ENCODE measurements at regions of chr6 and their contacts with region 1.

Region 1: GRCh38 chr6:32971581-32972352 is 3.4 kb downstream of the BRD2 start:
- DNase-seq: peak; percentile 84 to 100 (median 92)
- ATAC-seq: peak; percentile 55
- H3K4me3 ChIP-seq: peak overlapping the region; percentile 70
- H3K27ac ChIP-seq: peak overlapping the region; percentile 99
- H3K4me1 ChIP-seq: peaks cover 19 to 23% of the 10 kb centered on the region in 2 experiments; a peak in 4 of 5 replicates
- H3K27me3 ChIP-seq: no peaks in the 10 kb centered on the region
- CTCF ChIP-seq: no peak
- EP300 ChIP-seq: peak; percentile 34; the same call in 1 of the 2 replicates
- POLR2A ChIP-seq: peak; percentile 100
- RAD21 ChIP-seq: peak in 1 of 2 experiments; percentile 11; a peak in 1 of 4 replicates

Region 2: DNA sequence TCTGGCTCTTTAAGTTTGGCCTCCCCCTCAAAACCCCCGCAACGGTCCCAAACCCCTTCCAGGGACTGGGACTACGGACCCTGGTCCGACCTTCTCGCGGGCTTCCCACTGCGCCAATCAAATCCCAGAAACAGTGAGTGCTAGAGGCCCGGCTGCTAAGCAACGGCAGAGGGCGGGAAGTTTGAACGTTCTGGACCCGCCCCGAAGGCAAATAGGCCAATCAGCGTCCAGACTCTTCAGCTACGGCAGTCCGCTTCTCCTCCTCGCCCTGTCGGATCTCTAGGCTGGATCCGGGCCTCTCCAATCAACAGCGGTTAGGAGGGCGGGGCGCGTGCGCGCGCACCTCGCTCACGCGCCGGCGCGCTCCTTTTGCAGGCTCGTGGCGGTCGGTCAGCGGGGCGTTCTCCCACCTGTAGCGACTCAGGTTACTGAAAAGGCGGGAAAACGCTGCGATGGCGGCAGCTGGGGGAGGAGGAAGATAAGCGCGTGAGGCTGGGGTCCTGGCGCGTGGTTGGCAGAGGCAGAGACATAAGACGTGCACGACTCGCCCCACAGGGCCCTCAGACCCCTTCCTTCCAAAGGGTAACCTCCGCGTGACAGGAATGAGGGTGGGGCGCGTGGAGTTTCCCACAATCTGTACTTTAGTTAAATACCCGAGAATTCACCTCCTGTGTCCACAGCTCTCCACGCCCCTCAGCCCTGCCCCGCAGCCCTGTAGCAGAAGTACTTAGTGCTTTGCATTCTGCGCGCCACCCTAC is 1231.9 kb before region 1 on chr6 and contains the start of gene MSH5:
- CTCF ChIA-PET with region 1: no interaction called
- POLR2A ChIA-PET with region 1: interaction called, 11 read pairs
- in situ Hi-C with region 1: no loop called
- intact Hi-C with region 1: no loop called
- DNase-seq: peak; percentile 100
- ATAC-seq: peak; percentile 84
- H3K4me3 ChIP-seq: peak within 1 kb of the TSS; percentile 64
- H3K27ac ChIP-seq: peak within 1 kb of the TSS; percentile 95
- H3K4me1 ChIP-seq: peaks cover 56 to 61% of the 10 kb centered on the region in 2 experiments
- H3K27me3 ChIP-seq: no peaks in the 10 kb centered on the region
- CTCF ChIP-seq: peak in 1 of 3 experiments; percentile 13; a peak in 1 of 6 replicates
- EP300 ChIP-seq: peak; percentile 71
- POLR2A ChIP-seq: peak; percentile 96
- RAD21 ChIP-seq: peak in 1 of 2 experiments; percentile 28; a peak in 3 of 4 replicates
- polyA plus RNA-seq, gene MSH5: 12.5 to 14.0 TPM

Region 3: GRCh38 chr6:32522302-32523047 is 449.3 kb before region 1 on chr6:
- CTCF ChIA-PET with region 1: no interaction called
- POLR2A ChIA-PET with region 1: no interaction called
- in situ Hi-C with region 1: no loop called
- intact Hi-C with region 1: no loop called
- DNase-seq: no peak
- ATAC-seq: no peak
- H3K4me3 ChIP-seq: no peak overlapping the region
- H3K27ac ChIP-seq: no peak overlapping the region
- H3K4me1 ChIP-seq: no peaks in the 10 kb centered on the region
- H3K27me3 ChIP-seq: no peaks in the 10 kb centered on the region
- CTCF ChIP-seq: no peak
- EP300 ChIP-seq: no peak
- POLR2A ChIP-seq: no peak
- RAD21 ChIP-seq: no peak

Region 4: DNA sequence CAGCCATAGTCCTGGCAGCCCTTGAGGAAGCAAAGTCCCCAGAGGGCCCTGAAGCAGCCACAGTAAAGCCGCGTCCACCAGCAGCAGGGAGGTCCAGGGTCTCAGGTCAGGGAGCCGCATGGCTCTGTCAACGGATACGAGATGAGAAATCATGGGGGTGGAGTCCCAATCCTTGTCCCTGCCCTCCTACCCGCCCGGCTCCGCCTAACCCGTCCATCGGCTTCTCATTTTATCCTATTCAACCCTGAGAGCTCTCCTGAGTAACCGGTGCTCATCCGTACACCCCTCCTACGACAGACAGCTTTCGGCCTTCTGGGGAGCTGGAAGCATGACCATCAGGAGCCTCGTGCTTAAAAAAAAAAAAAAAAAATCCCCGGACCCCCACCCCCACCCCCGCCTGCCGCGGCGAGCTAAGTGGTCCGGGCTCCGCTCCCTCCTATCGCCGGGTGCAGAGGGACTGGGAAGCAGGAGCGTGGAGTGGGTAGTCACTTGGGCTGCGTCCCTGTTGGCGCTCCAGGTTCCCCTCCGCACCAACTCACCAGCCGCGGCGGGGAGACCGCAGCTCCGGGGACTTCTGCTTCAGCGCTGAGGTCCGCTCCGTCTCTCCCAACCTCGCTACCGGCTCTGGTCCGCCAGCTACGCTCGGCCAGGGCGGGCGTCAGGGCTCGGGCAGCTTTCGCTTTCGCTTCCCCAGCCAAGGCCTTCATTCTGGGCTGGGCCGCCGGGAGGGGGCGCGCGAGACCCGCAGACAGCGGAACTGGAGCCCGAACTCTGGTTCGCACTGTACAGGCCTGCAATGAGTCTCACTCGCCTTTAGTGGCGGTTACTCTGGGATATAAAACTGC is 133.4 kb before region 1 on chr6 and contains the start of gene TAP2:
- CTCF ChIA-PET with region 1: no interaction called
- POLR2A ChIA-PET with region 1: interaction called, 27 read pairs
- in situ Hi-C with region 1: no loop called
- intact Hi-C with region 1: no loop called
- DNase-seq: peak; percentile 94 to 97 (median 96)
- ATAC-seq: peak; percentile 94
- H3K4me3 ChIP-seq: peak within 1 kb of the TSS; percentile 73
- H3K27ac ChIP-seq: peak within 1 kb of the TSS; percentile 75
- H3K4me1 ChIP-seq: peaks cover 6 to 9% of the 10 kb centered on the region in 2 experiments; a peak in 3 of 5 replicates
- H3K27me3 ChIP-seq: no peaks in the 10 kb centered on the region
- CTCF ChIP-seq: peak; percentile 98 to 99 (median 99)
- EP300 ChIP-seq: no peak
- POLR2A ChIP-seq: peak; percentile 83
- RAD21 ChIP-seq: peak; percentile 100
- polyA plus RNA-seq, gene TAP2: 2.0 to 3.1 TPM

Region 5: DNA sequence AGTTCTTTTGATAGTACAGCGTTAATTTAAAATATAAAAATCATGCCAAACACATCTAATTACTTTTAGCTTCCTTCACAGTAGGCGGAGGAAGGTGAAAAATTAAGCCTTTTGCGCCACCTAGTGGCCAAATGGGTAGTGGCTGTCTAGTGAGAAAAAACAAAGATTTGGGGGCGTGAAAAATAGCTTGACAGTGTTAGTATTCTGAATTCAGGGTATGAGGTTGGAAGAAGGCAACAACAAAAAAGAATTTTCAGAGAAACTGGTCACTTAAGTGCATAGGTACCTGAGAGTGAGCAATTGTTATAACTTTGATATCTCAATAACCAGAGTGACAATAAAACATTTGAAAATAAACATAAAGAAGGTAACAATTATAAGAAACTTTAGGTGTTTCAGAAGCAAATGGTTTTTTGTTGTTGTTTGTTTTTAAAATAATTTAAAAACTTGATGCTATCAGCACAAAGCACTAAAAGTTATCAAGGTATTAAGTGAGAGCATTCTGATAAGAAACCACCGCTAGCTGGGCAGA is 103.4 kb before region 1 on chr6:
- CTCF ChIA-PET with region 1: interaction called, 4 read pairs
- POLR2A ChIA-PET with region 1: interaction called, 15 read pairs
- in situ Hi-C with region 1: no loop called
- intact Hi-C with region 1: no loop called
- DNase-seq: peak; percentile 69 to 88 (median 73)
- ATAC-seq: peak; percentile 97
- H3K4me3 ChIP-seq: no peak overlapping the region
- H3K27ac ChIP-seq: no peak overlapping the region
- H3K4me1 ChIP-seq: no peaks in the 10 kb centered on the region
- H3K27me3 ChIP-seq: peaks cover 15 to 18% of the 10 kb centered on the region in 2 experiments; a peak in 4 of 5 replicates
- CTCF ChIP-seq: peak; percentile 82 to 98 (median 89)
- EP300 ChIP-seq: no peak
- POLR2A ChIP-seq: no peak
- RAD21 ChIP-seq: peak; percentile 95 to 98

Region 6: GRCh38 chr6:32920715-32921114 is 51.1 kb before region 1 on chr6:
- CTCF ChIA-PET with region 1: no interaction called
- POLR2A ChIA-PET with region 1: interaction called, 13 read pairs
- in situ Hi-C with region 1: no loop called
- intact Hi-C with region 1: no loop called
- DNase-seq: no peak
- ATAC-seq: no peak
- H3K4me3 ChIP-seq: no peak overlapping the region
- H3K27ac ChIP-seq: no peak overlapping the region
- H3K4me1 ChIP-seq: no peaks in the 10 kb centered on the region
- H3K27me3 ChIP-seq: peaks cover 13 to 15% of the 10 kb centered on the region in 2 experiments; a peak in 3 of 5 replicates
- CTCF ChIP-seq: no peak
- EP300 ChIP-seq: no peak
- POLR2A ChIP-seq: no peak
- RAD21 ChIP-seq: no peak

Region 7: DNA sequence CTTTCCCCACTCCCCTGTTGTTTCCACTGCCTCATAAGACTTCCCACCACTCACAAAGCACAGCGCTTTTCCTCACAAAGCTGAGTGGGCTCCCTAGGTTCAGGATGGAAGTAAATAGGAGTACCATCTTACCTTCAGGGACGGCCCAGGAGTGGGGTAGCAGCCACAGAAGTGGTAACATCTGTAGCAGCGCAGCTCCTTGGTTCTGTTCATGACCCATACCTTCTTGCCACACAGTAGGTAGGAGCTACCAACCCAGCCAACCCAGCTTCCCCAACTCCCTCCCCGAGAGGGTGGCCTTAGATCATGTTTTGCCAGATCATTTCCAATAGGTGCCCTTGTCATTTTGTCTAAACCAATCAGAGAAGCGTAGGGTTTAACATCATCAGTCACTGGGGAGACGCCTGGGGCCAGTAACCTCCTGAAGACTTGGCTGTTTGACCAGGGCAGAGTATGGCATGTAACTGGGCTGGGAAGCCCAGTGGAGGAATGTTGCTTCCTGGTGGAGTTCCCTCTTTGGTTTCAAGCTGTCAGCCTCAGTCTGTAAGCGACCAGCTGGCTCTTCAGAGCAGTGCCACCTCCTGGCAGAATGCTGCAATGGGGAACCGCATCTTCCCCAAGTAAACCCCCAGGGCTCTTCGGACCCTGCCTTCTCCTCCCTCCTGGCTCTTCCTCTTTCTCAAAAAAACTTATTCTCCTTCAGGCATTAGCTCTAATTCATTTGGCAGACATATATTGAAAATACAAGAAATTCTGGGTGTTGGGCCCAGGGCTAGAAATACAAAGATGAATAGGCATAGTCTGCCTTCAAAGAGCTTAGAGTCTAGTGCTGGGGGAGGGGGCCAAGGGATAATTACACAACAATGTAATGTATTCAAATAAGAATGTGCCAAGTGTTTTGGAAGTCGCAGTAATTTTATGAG is 18.7 kb before region 1 on chr6 and contains the start of gene HLA-DMA:
- CTCF ChIA-PET with region 1: no interaction called
- POLR2A ChIA-PET with region 1: interaction called, 309 read pairs
- in situ Hi-C with region 1: no loop called
- intact Hi-C with region 1: no loop called
- DNase-seq: peak; percentile 55 to 71 (median 64)
- ATAC-seq: peak; percentile 91
- H3K4me3 ChIP-seq: no peak within 1 kb of the TSS
- H3K27ac ChIP-seq: no peak within 1 kb of the TSS
- H3K4me1 ChIP-seq: no peaks in the 10 kb centered on the region; a peak in 1 of 5 replicates
- H3K27me3 ChIP-seq: peaks cover 2 to 27% of the 10 kb centered on the region in 2 experiments; a peak in 3 of 5 replicates
- CTCF ChIP-seq: peak; percentile 67 to 80 (median 71)
- EP300 ChIP-seq: no peak
- POLR2A ChIP-seq: no peak
- RAD21 ChIP-seq: peak; percentile 21 to 46; a peak in 3 of 4 replicates
- polyA plus RNA-seq, gene HLA-DMA: 0.18 to 0.78 TPM

Region 8: GRCh38 chr6:33248925-33249731 is 277.4 kb after region 1 on chr6:
- CTCF ChIA-PET with region 1: no interaction called
- POLR2A ChIA-PET with region 1: interaction called, 17 read pairs
- in situ Hi-C with region 1: no loop called
- intact Hi-C with region 1: no loop called
- DNase-seq: peak; percentile 95 to 100 (median 96)
- ATAC-seq: peak; percentile 97
- H3K4me3 ChIP-seq: peak overlapping the region; percentile 53
- H3K27ac ChIP-seq: peak overlapping the region; percentile 91
- H3K4me1 ChIP-seq: peaks cover 22 to 31% of the 10 kb centered on the region in 2 experiments
- H3K27me3 ChIP-seq: peaks cover 4 to 6% of the 10 kb centered on the region in 2 experiments; a peak in 2 of 5 replicates
- CTCF ChIP-seq: peak; percentile 34 to 52 (median 48); a peak in 5 of 6 replicates
- EP300 ChIP-seq: 0 out of 2 replicates have a peak, but pooled peaks have one; percentile 6
- POLR2A ChIP-seq: peak; percentile 96
- RAD21 ChIP-seq: 0 out of 4 replicates have a peak, but pooled peaks of 1 of the 2 experiments have one; percentile 25

Measured in K562 (cell line).